ENCODE measurements at regions of chr6 and their contacts with region 1.

Region 1: DNA sequence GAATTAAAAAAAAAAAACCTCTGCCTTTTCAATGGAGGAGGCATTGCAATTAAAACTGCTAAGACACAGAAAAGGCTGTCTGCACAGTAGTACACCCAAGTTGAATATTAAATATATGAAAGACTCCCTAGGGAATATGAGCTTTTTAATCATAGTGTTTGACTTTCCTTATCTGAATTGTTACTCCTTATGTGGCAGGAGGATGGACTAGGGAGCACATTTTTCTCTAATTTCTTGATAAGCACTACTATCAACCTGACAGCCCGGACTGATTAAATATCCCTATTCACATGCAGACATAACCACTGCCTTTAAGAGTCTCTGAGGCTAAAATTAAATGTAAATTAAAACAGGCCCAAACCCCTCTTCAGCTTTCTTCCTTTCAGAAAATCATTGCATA is 428.6 kb upstream of the GJE1 start:
- DNase-seq: no peak
- ATAC-seq: no peak

Region 2: GRCh38 chr6:141764388-141764787 is 60.2 kb after region 1 on chr6:
- intact Hi-C with region 1: loop called (anchors 2 kb)
- DNase-seq: no peak
- ATAC-seq: no peak

Region 3: GRCh38 chr6:142361782-142362750 is 657.9 kb after region 1 on chr6:
- intact Hi-C with region 1: no loop called
- DNase-seq: no peak
- ATAC-seq: no peak

Measured in sciatic nerve (tissue), 2 donors.